CD4-positive, alpha-beta memory T cell (primary cell): ENCODE measurements at regions of chr1 and their contacts with region 1.

Region 1: DNA sequence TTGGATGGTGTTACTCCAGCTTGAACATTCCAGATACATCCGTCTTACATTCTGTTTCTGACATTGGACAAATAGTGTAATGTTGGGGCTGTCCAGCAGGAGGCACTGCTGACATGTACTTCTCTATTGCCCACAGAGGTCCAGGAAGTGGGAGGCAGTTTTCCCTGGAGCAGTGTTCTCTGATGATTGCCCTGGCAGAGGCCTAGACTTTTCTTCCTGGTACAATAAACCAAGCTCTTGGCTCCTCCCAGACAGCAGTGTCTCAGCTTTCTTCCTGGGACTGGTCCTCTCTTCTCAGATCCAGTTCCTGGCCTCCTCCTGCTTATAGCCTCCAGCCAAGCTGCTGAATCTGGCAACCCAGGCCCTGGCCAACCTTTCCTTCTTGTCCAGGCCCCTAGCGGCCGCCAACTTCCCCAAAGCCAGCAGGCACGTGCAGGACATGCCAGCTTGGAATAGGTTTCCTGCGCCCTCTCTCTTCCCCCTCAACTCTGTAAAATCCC is 14.9 kb upstream of the IFNLR1 start:
- DNase-seq: peak; percentile 32 to 53 (median 43)
- H3K4me3 ChIP-seq: no peak overlapping the region
- H3K4me3 Mint-ChIP-seq: no peak overlapping the region
- H3K27ac ChIP-seq: no peak overlapping the region
- H3K27ac Mint-ChIP-seq: peak overlapping the region in 3 of 7 donors; percentile 11 to 50 (median 36)
- H3K4me1 ChIP-seq: peaks cover 5% of the 10 kb centered on the region
- H3K4me1 Mint-ChIP-seq: peaks cover 3 to 13% (median 6%) of the 10 kb centered on the region in 4 donors
- H3K27me3 ChIP-seq: no peaks in the 10 kb centered on the region
- H3K27me3 Mint-ChIP-seq: no peaks in the 10 kb centered on the region

Region 2: GRCh38 chr1:24186993-24187805 is 14.8 kb before region 1 on chr1 and contains the start of gene IFNLR1:
- CTCF ChIA-PET with region 1: interaction called, 127 read pairs
- POLR2A ChIA-PET with region 1: interaction called, 7 read pairs
- intact Hi-C with region 1: no loop called
- DNase-seq: peak; percentile 42 to 75 (median 57)
- H3K4me3 ChIP-seq: peak within 1 kb of the TSS; percentile 11 to 60
- H3K4me3 Mint-ChIP-seq: peak within 1 kb of the TSS; percentile 86 to 92 (median 90)
- H3K27ac ChIP-seq: peak within 1 kb of the TSS; percentile 50
- H3K27ac Mint-ChIP-seq: peak within 1 kb of the TSS; percentile 53 to 93 (median 83)
- H3K4me1 ChIP-seq: peaks cover 27% of the 10 kb centered on the region
- H3K4me1 Mint-ChIP-seq: peaks cover 20 to 40% (median 34%) of the 10 kb centered on the region in 4 donors
- H3K27me3 ChIP-seq: no peaks in the 10 kb centered on the region
- H3K27me3 Mint-ChIP-seq: no peaks in the 10 kb centered on the region
- total RNA-seq, gene IFNLR1: 3.0 to 4.5 TPM

Region 3: DNA sequence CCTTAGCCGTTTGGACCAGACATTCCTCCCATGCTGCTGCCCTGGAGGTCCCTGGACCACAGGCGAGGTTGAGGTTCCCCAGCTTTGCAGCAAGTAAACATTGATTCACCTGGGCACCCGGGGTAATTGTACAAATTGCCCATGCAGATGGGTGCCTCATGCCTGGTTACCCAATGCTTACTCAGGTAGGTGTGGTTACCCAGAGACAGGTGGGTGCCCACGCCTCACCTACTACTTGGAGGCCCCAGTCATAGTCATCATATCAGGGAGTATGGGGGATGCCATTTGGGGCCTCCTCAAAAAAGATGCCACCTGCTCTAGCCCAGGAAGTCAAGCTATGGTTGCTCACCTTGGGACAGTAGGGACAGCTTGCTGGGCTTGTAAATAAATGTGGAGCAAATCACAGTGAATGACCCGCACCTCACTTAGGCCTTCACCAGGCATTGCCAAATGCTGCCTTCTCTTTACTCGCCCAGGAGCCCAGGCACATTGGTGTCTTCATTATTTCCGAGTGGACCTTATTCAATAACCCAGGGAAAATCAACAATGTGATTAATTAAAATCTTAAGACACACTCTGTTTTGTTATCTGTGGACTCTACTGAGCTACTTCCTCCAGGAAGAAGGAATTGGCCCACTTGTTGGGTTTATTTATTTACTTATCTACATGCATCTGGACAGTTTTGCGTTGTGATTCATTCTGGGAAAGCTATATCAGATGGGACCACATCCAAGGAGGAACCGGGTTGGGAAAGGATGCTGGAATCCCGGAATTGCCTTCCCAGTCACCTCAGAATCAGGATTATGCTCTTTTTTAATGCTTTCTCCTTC is 81.5 kb after region 1 on chr1:
- CTCF ChIA-PET with region 1: no interaction called
- POLR2A ChIA-PET with region 1: no interaction called
- intact Hi-C with region 1: no loop called
- DNase-seq: no peak
- H3K4me3 ChIP-seq: no peak overlapping the region
- H3K4me3 Mint-ChIP-seq: no peak overlapping the region
- H3K27ac ChIP-seq: no peak overlapping the region
- H3K27ac Mint-ChIP-seq: no peak overlapping the region
- H3K4me1 ChIP-seq: no peaks in the 10 kb centered on the region
- H3K4me1 Mint-ChIP-seq: no peaks in the 10 kb centered on the region
- H3K27me3 ChIP-seq: no peaks in the 10 kb centered on the region
- H3K27me3 Mint-ChIP-seq: peaks cover 0 to 2% of the 10 kb centered on the region in 2 donors

Region 4: GRCh38 chr1:24385160-24385940 is 183.4 kb after region 1 on chr1:
- CTCF ChIA-PET with region 1: interaction called, 517 read pairs
- POLR2A ChIA-PET with region 1: interaction called, 86 read pairs
- intact Hi-C with region 1: no loop called
- DNase-seq: peak in 3 of 5 donors; percentile 14 to 36 (median 19)
- H3K4me3 ChIP-seq: no peak overlapping the region
- H3K4me3 Mint-ChIP-seq: peak overlapping the region in 1 of 8 donors; percentile 10
- H3K27ac ChIP-seq: no peak overlapping the region
- H3K27ac Mint-ChIP-seq: peak overlapping the region in 6 of 7 donors; percentile 3 to 85 (median 47)
- H3K4me1 ChIP-seq: peaks cover 19% of the 10 kb centered on the region
- H3K4me1 Mint-ChIP-seq: peaks cover 13 to 23% (median 16%) of the 10 kb centered on the region in 4 donors
- H3K27me3 ChIP-seq: no peaks in the 10 kb centered on the region
- H3K27me3 Mint-ChIP-seq: no peaks in the 10 kb centered on the region

Region 5: GRCh38 chr1:24526940-24527542 is 325.1 kb after region 1 on chr1:
- CTCF ChIA-PET with region 1: interaction called, 4 read pairs
- POLR2A ChIA-PET with region 1: interaction called, 6 read pairs
- intact Hi-C with region 1: loop called (anchors 5 kb)
- DNase-seq: peak; percentile 47 to 59 (median 53)
- H3K4me3 ChIP-seq: no peak overlapping the region
- H3K4me3 Mint-ChIP-seq: peak overlapping the region in 3 of 8 donors; percentile 36 to 58 (median 52)
- H3K27ac ChIP-seq: peak overlapping the region; percentile 31
- H3K27ac Mint-ChIP-seq: peak overlapping the region; percentile 65 to 94 (median 87)
- H3K4me1 ChIP-seq: peaks cover 71% of the 10 kb centered on the region
- H3K4me1 Mint-ChIP-seq: peaks cover 46 to 82% (median 63%) of the 10 kb centered on the region in 4 donors
- H3K27me3 ChIP-seq: no peaks in the 10 kb centered on the region
- H3K27me3 Mint-ChIP-seq: no peaks in the 10 kb centered on the region

Region 6: GRCh38 chr1:24688621-24689195 is 486.7 kb after region 1 on chr1:
- CTCF ChIA-PET with region 1: interaction called, 11 read pairs
- POLR2A ChIA-PET with region 1: no interaction called
- intact Hi-C with region 1: no loop called
- DNase-seq: peak; percentile 37 to 57 (median 49)
- H3K4me3 ChIP-seq: no peak overlapping the region
- H3K4me3 Mint-ChIP-seq: no peak overlapping the region
- H3K27ac ChIP-seq: no peak overlapping the region
- H3K27ac Mint-ChIP-seq: no peak overlapping the region
- H3K4me1 ChIP-seq: no peaks in the 10 kb centered on the region
- H3K4me1 Mint-ChIP-seq: peaks cover 0 to 4% (median 2%) of the 10 kb centered on the region in 4 donors
- H3K27me3 ChIP-seq: no peaks in the 10 kb centered on the region
- H3K27me3 Mint-ChIP-seq: no peaks in the 10 kb centered on the region